ENCODE measurements at regions of chr11 and their contacts with region 1.

Region 1: GRCh38 chr11:122038543-122038942 is 77.5 kb downstream of the BLID start:
- DNase-seq: no peak
- H3K4me3 ChIP-seq: no peak overlapping the region
- H3K27ac ChIP-seq: peak overlapping the region in 1 of 2 donors; percentile 26
- H3K4me1 ChIP-seq: peaks cover 0 to 50% (median 11%) of the 10 kb centered on the region in 4 donors
- H3K27me3 ChIP-seq: no peaks in the 10 kb centered on the region
- CTCF ChIP-seq: no peak

Region 2: GRCh38 chr11:121595717-121596161 is 442.8 kb before region 1 on chr11:
- intact Hi-C with region 1: no loop called
- DNase-seq: peak; percentile 64 to 85
- H3K4me3 ChIP-seq: no peak overlapping the region
- H3K27ac ChIP-seq: peak overlapping the region; percentile 45 to 47
- H3K4me1 ChIP-seq: peaks cover 0 to 22% (median 12%) of the 10 kb centered on the region in 4 donors
- H3K27me3 ChIP-seq: no peaks in the 10 kb centered on the region
- CTCF ChIP-seq: peak in 1 of 2 experiments; percentile 12

Region 3: DNA sequence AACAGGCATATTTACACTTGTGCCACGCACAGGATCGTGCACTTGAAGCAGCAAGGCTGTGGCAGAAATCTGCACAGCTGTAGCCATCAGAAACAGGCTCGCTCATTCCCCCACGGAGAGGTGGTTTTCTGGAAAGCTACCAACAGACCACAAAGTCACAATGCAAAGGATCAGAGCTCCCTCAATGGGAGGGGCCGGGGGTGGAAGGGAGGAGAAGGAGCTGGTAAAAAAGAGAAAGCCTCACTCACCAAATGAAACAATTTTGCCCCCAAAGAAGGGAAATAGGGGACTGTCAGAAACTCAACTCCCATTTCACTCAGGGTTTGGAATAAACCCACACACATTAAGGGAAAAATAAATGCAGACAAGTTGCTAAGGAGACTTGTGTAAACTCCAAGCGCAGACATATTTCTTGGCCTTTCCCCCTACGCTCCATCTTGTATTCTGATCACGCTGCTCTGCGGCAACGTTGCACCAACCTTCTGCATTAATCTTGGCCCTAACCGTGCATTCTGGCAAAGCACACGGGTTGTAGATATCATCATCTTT is 120.7 kb after region 1 on chr11:
- intact Hi-C with region 1: no loop called
- DNase-seq: no peak
- H3K4me3 ChIP-seq: peak overlapping the region; percentile 44 to 47
- H3K27ac ChIP-seq: peak overlapping the region; percentile 71 to 72
- H3K4me1 ChIP-seq: peaks cover 0 to 73% (median 22%) of the 10 kb centered on the region in 4 donors
- H3K27me3 ChIP-seq: no peaks in the 10 kb centered on the region
- CTCF ChIP-seq: no peak

Region 4: DNA sequence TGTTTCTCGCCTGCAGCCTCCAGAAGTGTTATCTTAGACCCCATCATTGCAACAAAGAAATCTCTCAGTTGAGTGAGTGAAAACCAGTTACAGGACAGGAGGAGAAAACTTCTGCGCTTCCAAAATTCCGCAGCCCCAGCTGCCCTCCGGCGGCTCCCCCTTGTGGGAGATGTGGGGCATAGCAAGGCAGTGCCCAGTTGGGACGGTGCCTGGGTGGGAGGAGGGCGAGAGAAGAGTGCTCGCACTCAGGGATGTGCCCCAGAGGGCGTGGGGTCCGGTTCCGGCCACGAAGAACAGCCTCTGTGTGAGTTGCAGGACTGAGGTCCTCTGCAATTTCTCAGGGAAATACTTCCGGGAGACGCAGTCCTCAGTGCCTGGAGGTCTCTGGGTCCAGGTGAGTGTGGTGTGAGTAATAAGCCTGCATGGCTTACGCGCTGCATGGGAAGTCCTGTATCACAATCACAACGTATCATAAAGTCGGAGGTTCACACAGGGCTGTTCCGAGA is 164.5 kb after region 1 on chr11:
- intact Hi-C with region 1: loop called (anchors 10 kb)
- DNase-seq: peak; percentile 63 to 87
- H3K4me3 ChIP-seq: peak overlapping the region; percentile 46 to 55
- H3K27ac ChIP-seq: peak overlapping the region; percentile 76 to 77
- H3K4me1 ChIP-seq: peaks cover 0 to 78% (median 36%) of the 10 kb centered on the region in 4 donors
- H3K27me3 ChIP-seq: no peaks in the 10 kb centered on the region
- CTCF ChIP-seq: peak; percentile 95 to 99

Region 5: DNA sequence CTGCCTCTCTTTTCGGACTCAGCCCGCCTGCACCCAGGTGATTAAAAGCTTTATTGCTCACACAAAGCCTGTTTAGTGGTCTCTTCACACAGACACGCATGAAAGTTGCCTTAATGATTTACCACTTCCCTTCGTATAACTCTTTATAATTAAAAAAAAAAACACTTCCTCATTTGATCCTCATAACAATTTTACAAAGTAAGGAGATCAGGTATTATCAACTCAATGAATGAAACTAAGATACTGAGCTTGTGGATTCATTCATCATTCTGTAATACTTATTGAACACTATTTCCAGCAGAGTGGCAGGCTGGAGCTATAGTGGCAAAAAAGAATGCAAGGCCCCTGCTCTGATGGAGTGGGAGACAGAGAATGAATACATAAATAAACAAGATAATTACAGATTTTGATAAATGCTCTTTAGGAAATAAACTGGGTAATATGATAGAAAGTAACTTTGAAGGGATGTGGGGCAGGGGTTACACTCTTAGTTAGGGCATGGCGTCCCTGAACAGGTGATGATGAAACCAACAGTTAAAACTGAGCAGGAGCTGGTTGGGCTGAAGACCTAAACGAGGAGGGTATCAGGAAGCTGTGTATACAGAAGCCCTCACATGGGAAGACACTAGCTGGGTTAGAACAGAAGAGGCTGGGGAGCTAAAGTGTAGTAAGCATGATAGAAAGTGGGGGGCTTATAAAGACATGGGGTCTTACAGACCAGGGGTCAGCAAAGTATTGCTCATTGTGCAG is 794.4 kb after region 1 on chr11:
- intact Hi-C with region 1: no loop called
- DNase-seq: no peak
- H3K4me3 ChIP-seq: no peak overlapping the region
- H3K27ac ChIP-seq: no peak overlapping the region
- H3K4me1 ChIP-seq: no peaks in the 10 kb centered on the region
- H3K27me3 ChIP-seq: no peaks in the 10 kb centered on the region
- CTCF ChIP-seq: no peak

Measured in tibial artery (tissue), 4 donors.